ENCODE measurements at regions of chr2 and their contacts with region 1.

Region 1: DNA sequence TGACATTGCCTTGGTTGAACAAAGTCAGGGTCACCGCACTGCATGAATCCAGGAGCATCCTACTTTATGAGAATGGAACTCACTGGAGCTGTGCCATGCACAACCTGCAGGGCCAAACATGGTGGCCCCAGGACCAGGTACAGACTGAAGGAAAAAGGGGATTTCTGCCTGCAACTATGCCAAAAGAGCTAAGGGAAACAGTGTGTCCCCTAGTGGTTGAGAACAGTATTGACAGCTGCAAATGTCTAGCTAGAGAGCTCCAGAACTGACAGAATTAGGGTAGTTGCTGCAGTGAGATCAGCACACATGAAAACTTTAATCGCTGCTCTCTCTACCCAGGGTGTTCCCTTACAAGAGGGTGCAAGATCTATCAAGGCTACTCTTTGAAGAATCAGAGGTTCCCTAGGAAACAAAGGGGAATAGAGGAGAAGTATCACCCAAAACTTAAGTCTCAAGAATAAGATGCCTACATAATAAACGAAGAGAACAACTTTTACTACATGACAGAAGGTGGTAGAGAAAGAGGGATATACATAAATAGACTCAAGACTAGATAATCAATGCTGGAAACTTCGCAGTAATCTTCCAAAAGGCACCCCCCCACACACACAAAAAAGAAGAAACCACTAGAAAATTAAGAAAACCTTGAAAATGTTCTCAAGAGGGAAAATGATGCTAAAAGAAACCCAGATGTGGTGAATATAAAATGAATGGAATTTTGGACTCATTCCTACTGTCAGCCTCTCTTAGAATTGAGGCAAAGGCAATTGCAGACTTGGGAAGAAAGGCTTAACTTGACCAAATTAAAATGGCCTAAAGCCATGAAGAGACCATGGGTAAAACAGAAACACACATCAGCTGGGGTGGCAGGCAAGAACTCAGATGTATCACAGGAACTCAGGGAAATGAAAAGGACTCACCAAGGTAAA is 43.6 kb upstream of the IHH start:
- DNase-seq: peak; percentile 33
- ATAC-seq: peak; percentile 93
- H3K4me3 ChIP-seq: no peak overlapping the region
- H3K27ac ChIP-seq: no peak overlapping the region
- H3K4me1 ChIP-seq: no peaks in the 10 kb centered on the region
- H3K27me3 ChIP-seq: no peaks in the 10 kb centered on the region
- CTCF ChIP-seq: peak; percentile 77 to 93 (median 92)
- POLR2A ChIP-seq: no peak
- RAD21 ChIP-seq: peak; percentile 62

Region 2: DNA sequence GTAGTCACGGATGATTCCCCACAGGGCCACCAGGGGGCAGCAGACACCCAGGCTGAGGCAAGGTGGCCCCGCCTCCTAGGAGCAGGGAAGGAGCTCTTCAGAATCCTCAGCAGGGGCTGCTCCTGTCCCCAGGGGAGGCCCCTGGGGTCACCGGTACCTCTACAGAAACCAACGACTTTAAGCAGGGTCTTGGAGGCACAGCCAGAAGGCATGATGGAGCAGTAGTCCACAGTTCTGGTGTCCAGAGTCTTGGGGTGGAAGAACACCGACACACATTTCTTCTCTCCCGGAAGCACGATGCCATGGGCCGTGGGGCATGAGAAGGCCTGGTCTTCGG is 74.6 kb before region 1 on chr2:
- CTCF ChIA-PET with region 1: interaction called, 10 read pairs
- POLR2A ChIA-PET with region 1: no interaction called
- RAD21 ChIA-PET with region 1: interaction called in 1 of 2 experiments, 3 read pairs
- intact Hi-C with region 1: no loop called
- DNase-seq: no peak
- ATAC-seq: peak; percentile 97
- H3K4me3 ChIP-seq: no peak overlapping the region
- H3K27ac ChIP-seq: no peak overlapping the region
- H3K4me1 ChIP-seq: no peaks in the 10 kb centered on the region; a peak in 1 of 4 replicates
- H3K27me3 ChIP-seq: peaks cover 18% of the 10 kb centered on the region
- CTCF ChIP-seq: peak; percentile 92 to 97 (median 96)
- POLR2A ChIP-seq: no peak
- RAD21 ChIP-seq: peak; percentile 92

Region 3: DNA sequence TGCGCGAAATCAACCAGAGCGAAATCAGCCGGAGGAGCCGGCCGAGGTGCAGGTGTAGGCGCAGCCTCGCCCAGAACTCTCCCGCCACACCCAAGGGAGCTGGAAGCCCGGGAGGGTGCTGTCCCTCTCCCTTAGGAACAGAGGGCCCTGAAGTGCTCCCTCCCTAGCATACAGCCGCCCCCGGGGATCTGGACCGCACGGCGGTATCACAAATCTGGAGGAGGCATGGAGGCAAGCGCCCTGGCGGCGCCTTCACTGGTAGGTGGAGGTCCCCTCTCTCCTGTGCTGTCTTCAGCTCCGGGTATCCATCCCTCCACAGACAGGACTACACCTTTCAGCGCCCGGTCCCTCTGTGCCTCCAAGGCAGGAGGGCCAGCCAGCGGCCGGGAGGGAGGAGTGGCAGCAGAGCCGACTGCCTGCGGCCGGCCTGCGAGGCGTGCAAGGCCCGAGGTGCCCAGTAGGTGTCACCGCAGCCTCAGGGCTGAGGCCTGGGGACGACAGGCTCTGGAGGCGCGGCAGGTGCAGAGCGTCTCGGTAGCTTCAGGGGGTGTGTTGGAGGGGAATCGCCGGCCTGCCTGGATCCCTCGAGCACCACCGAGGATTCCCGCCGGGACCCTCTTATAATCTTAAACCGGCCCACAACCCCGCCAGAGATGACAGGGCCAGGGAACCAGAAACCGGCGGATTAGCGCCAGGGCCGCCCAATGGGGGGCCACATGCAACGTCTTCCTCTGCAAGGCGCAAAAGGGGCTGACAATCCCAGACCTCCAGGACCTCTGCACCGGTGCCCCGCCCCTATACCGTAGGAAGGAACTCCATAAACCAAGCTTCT is 46.4 kb before region 1 on chr2:
- CTCF ChIA-PET with region 1: interaction called, 10 read pairs
- POLR2A ChIA-PET with region 1: no interaction called
- RAD21 ChIA-PET with region 1: interaction called in 1 of 2 experiments, 3 read pairs
- intact Hi-C with region 1: no loop called
- DNase-seq: peak; percentile 26
- ATAC-seq: peak; percentile 97
- H3K4me3 ChIP-seq: no peak overlapping the region
- H3K27ac ChIP-seq: no peak overlapping the region
- H3K4me1 ChIP-seq: no peaks in the 10 kb centered on the region
- H3K27me3 ChIP-seq: peaks cover 16% of the 10 kb centered on the region; the same call in 1 of the 2 replicates
- CTCF ChIP-seq: peak; percentile 83 to 92 (median 87)
- POLR2A ChIP-seq: no peak
- RAD21 ChIP-seq: peak; percentile 96

Region 4: DNA sequence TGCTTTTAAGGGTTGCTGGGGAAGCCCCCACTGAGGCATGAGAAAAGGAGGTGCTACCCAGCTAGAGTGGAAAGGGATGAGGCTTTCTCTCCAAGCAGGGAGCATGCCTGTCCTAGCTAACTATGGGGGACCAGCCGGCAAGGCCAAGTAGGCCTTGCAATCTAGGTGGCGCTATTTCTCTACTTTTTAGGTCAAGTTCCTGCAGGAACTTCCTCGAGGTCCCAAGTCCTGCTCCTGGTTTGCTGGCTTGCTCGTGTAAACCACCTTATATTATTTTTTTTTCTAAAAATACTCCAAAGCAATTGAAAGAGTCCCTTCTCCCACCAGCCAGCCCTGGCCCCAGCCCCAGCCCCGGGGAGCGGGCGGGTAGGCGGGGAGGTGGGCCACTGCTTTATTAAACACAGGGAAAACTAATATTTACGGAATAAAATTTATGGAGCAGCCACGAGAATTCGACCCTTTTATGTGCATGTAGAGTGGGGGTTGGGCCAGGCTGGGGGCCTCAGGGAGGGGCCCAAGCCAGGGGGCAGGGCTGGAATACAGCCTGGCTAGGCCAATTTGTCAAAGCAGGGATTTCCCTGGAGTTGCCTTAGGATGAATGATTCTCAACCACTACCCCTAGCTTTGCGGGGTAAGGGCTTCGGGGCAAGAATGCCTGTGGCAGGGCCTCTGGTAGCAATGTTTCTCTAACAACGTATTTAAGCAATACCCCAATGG is 30.8 kb before region 1 on chr2:
- CTCF ChIA-PET with region 1: interaction called, 29 read pairs
- POLR2A ChIA-PET with region 1: interaction called, 3 read pairs
- RAD21 ChIA-PET with region 1: interaction called in 1 of 2 experiments, 3 read pairs
- intact Hi-C with region 1: no loop called
- DNase-seq: peak; percentile 55
- ATAC-seq: peak; percentile 90
- H3K4me3 ChIP-seq: no peak overlapping the region
- H3K27ac ChIP-seq: no peak overlapping the region
- H3K4me1 ChIP-seq: peaks cover 0 to 9% of the 10 kb centered on the region in 2 experiments; a peak in 1 of 4 replicates
- H3K27me3 ChIP-seq: no peaks in the 10 kb centered on the region
- CTCF ChIP-seq: peak; percentile 75 to 83 (median 80)
- POLR2A ChIP-seq: no peak
- RAD21 ChIP-seq: peak; percentile 79

Region 5: GRCh38 chr2:219079417-219079816 is 25.0 kb before region 1 on chr2:
- CTCF ChIA-PET with region 1: interaction called, 10 read pairs
- POLR2A ChIA-PET with region 1: no interaction called
- RAD21 ChIA-PET with region 1: interaction called in 1 of 2 experiments, 3 read pairs
- intact Hi-C with region 1: no loop called
- DNase-seq: no peak
- ATAC-seq: no peak
- H3K4me3 ChIP-seq: no peak overlapping the region
- H3K27ac ChIP-seq: no peak overlapping the region
- H3K4me1 ChIP-seq: no peaks in the 10 kb centered on the region
- H3K27me3 ChIP-seq: no peaks in the 10 kb centered on the region
- CTCF ChIP-seq: no peak
- POLR2A ChIP-seq: no peak
- RAD21 ChIP-seq: no peak

Region 6: GRCh38 chr2:219119422-219120043 is 15.2 kb after region 1 on chr2:
- CTCF ChIA-PET with region 1: interaction called, 42 read pairs
- POLR2A ChIA-PET with region 1: no interaction called
- RAD21 ChIA-PET with region 1: no interaction called
- intact Hi-C with region 1: no loop called
- DNase-seq: peak; percentile 27
- ATAC-seq: peak; percentile 93
- H3K4me3 ChIP-seq: no peak overlapping the region
- H3K27ac ChIP-seq: no peak overlapping the region
- H3K4me1 ChIP-seq: peaks cover 7 to 8% of the 10 kb centered on the region in 2 experiments
- H3K27me3 ChIP-seq: no peaks in the 10 kb centered on the region; the same call in 1 of the 2 replicates
- CTCF ChIP-seq: peak; percentile 67 to 93 (median 90)
- POLR2A ChIP-seq: no peak
- RAD21 ChIP-seq: peak; percentile 91